ENCODE measurements at regions of chr7 and their contacts with region 1.

Region 1: DNA sequence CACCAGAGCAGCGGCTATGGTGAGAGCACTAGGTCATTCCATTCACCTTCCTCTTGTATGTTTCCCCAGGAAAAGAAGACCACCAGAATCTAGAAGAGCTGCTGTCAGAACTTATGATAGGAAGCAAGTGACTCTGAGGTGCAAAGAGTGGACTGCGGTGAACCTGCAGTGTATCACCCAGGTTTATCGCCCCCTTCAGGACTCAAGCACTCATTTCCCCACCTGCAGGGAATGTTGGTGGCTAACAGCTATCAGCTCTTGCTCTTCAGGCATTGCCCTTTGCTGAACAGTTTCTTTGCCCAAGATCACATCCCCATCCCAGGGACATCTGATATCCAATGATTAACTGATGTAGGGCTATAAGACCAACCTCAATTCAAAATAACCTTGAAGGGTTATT is 66.3 kb upstream of the IL6 start:
- DNase-seq: no peak
- ATAC-seq: peak; percentile 70
- H3K4me3 ChIP-seq: no peak overlapping the region
- H3K27ac ChIP-seq: no peak overlapping the region
- H3K4me1 ChIP-seq: no peaks in the 10 kb centered on the region
- H3K27me3 ChIP-seq: no peaks in the 10 kb centered on the region
- CTCF ChIP-seq: peak in 2 of 3 experiments; percentile 46 to 53; a peak in 4 of 6 replicates
- POLR2A ChIP-seq: no peak
- RAD21 ChIP-seq: no peak

Region 2: GRCh38 chr7:22672846-22673652 is 12.3 kb after region 1 on chr7:
- CTCF ChIA-PET with region 1: interaction called, 13 read pairs
- POLR2A ChIA-PET with region 1: no interaction called
- RAD21 ChIA-PET with region 1: no interaction called
- intact Hi-C with region 1: no loop called
- DNase-seq: no peak
- ATAC-seq: no peak
- H3K4me3 ChIP-seq: no peak overlapping the region
- H3K27ac ChIP-seq: no peak overlapping the region
- H3K4me1 ChIP-seq: peaks cover 0 to 11% of the 10 kb centered on the region in 2 experiments; a peak in 3 of 4 replicates
- H3K27me3 ChIP-seq: no peaks in the 10 kb centered on the region
- CTCF ChIP-seq: no peak
- POLR2A ChIP-seq: no peak
- RAD21 ChIP-seq: no peak

Region 3: DNA sequence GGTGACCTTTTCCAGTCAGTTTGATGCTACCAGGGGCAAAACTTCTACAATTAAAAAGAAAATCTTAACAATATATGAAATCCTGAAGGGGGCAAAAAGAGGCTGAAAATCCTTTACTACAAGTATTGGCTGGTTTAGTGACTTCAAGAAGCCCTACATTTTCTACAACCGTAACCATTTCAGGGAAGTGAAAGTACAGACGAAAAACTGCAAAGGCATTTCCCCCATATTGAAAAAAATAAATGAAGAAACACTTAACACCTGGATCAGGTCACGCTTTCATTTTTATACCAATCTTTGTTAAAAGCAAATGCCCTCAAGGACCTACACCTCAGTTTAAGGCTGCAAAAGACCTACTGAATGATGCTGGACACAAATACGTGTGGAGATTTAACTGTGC is 104.9 kb after region 1 on chr7:
- CTCF ChIA-PET with region 1: no interaction called
- POLR2A ChIA-PET with region 1: no interaction called
- RAD21 ChIA-PET with region 1: no interaction called
- intact Hi-C with region 1: no loop called
- DNase-seq: no peak
- ATAC-seq: no peak
- H3K4me3 ChIP-seq: no peak overlapping the region
- H3K27ac ChIP-seq: no peak overlapping the region
- H3K4me1 ChIP-seq: no peaks in the 10 kb centered on the region
- H3K27me3 ChIP-seq: no peaks in the 10 kb centered on the region
- CTCF ChIP-seq: no peak
- POLR2A ChIP-seq: no peak
- RAD21 ChIP-seq: no peak

Measured in HCT116 (cell line).